ENCODE measurements at regions of chr4 and their contacts with region 1.

Region 1: GRCh38 chr4:122309988-122310626 is 68.7 kb upstream of the ADAD1 start:
- DNase-seq: peak; percentile 18
- ATAC-seq: no peak
- H3K4me3 ChIP-seq: no peak overlapping the region
- H3K27ac ChIP-seq: no peak overlapping the region
- H3K4me1 ChIP-seq: no peaks in the 10 kb centered on the region
- H3K27me3 ChIP-seq: no peaks in the 10 kb centered on the region
- CTCF ChIP-seq: peak; percentile 49
- POLR2A ChIP-seq: no peak
- RAD21 ChIP-seq: peak; percentile 38; the same call in 1 of the 2 replicates

Region 2: DNA sequence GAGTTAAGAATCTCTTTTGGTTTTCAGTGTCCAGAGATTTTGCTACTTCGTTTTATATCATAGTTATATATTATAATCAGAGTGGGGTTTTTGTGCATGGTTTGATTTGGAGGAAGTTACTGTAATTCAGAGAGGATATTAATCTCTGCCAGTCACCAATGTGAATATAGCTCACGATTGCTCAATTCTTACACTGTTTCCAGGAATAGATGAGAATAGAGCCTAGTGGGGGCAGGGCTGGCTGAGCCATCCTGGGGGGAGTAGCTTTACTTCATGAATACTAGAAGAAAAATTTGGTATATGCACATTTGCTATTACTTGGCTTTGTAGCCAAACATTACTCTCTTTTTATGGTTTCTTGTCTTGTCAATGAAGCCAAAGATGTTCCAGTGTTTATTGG is 297.4 kb before region 1 on chr4:
- CTCF ChIA-PET with region 1: no interaction called
- POLR2A ChIA-PET with region 1: no interaction called
- dilution Hi-C with region 1: no loop called
- in situ Hi-C with region 1: no loop called
- intact Hi-C with region 1: no loop called
- DNase-seq: peak; percentile 55
- ATAC-seq: peak; percentile 50
- H3K4me3 ChIP-seq: no peak overlapping the region
- H3K27ac ChIP-seq: no peak overlapping the region
- H3K4me1 ChIP-seq: peaks cover 19% of the 10 kb centered on the region
- H3K27me3 ChIP-seq: no peaks in the 10 kb centered on the region
- CTCF ChIP-seq: no peak
- POLR2A ChIP-seq: no peak
- RAD21 ChIP-seq: no peak

Region 3: DNA sequence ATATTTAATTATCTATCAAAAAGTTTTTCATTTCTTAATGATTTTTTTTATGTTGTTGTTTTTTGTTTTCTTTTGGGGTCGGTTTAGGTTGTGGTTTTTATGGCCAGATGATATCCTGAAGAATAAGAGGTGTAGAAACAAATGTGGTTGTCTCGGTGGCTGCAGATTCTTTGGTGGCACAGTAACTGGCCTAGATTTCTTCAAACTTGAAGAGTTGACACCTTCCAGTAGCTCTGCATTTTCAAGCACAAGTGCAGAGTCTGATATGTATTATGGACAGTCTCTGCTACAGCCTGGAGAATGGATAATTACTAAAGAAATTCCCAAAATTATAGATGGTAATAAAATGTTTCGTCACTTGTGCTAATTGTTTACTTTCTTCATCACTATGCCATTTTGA is 75.4 kb before region 1 on chr4:
- CTCF ChIA-PET with region 1: no interaction called
- POLR2A ChIA-PET with region 1: no interaction called
- dilution Hi-C with region 1: no loop called
- in situ Hi-C with region 1: no loop called
- intact Hi-C with region 1: no loop called
- DNase-seq: no peak
- ATAC-seq: no peak
- H3K4me3 ChIP-seq: no peak overlapping the region
- H3K27ac ChIP-seq: no peak overlapping the region
- H3K4me1 ChIP-seq: no peaks in the 10 kb centered on the region
- H3K27me3 ChIP-seq: no peaks in the 10 kb centered on the region
- CTCF ChIP-seq: no peak
- POLR2A ChIP-seq: no peak
- RAD21 ChIP-seq: no peak

Region 4: GRCh38 chr4:122577808-122578781 is 268.0 kb after region 1 on chr4:
- CTCF ChIA-PET with region 1: no interaction called
- POLR2A ChIA-PET with region 1: no interaction called
- dilution Hi-C with region 1: no loop called
- in situ Hi-C with region 1: no loop called
- intact Hi-C with region 1: loop called (anchors 2 kb)
- DNase-seq: peak; percentile 38
- ATAC-seq: peak; percentile 72; the same call in 1 of the 2 replicates
- H3K4me3 ChIP-seq: no peak overlapping the region
- H3K27ac ChIP-seq: no peak overlapping the region
- H3K4me1 ChIP-seq: no peaks in the 10 kb centered on the region
- H3K27me3 ChIP-seq: no peaks in the 10 kb centered on the region
- CTCF ChIP-seq: peak; percentile 56
- POLR2A ChIP-seq: no peak
- RAD21 ChIP-seq: peak; percentile 40

Region 5: DNA sequence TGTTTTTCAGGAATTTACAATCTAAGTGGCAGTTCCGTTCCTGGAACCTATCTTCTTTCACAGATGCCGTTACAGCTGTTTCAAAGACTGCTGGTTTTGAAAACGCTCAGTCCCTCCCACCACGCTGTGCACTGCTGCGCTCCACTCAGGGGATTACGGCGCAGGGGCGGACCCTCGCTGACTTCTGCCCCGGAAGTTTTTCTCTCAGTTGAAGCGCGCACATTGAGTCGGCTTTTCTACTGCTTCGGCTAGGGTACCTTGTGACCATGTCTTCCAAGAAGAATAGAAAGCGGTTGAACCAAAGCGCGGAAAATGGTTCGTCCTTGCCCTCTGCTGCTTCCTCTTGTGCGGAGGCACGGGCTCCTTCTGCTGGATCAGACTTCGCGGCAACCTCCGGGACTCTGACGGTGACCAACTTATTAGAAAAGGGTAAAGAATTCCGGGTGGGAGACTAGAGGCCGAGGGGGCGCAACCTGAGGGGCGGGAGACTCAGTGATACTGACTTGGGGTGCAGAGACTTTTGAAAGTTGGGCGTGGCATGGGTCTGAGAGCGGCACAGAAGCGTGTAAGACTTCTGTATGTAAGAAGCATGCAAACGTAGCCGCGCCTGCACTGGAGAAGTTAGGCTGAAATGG is 612.9 kb after region 1 on chr4:
- CTCF ChIA-PET with region 1: no interaction called
- POLR2A ChIA-PET with region 1: no interaction called
- dilution Hi-C with region 1: no loop called
- in situ Hi-C with region 1: loop called (anchors 25 kb)
- intact Hi-C with region 1: no loop called
- DNase-seq: peak; percentile 82
- ATAC-seq: peak; percentile 94
- H3K4me3 ChIP-seq: peak overlapping the region; percentile 93
- H3K27ac ChIP-seq: peak overlapping the region; percentile 83
- H3K4me1 ChIP-seq: no peaks in the 10 kb centered on the region
- H3K27me3 ChIP-seq: no peaks in the 10 kb centered on the region
- CTCF ChIP-seq: no peak
- POLR2A ChIP-seq: no peak
- RAD21 ChIP-seq: no peak

Measured in IMR-90 (cell line).